HCT116 (cell line): ENCODE measurements at regions of chr11 and their contacts with region 1.

Region 1: GRCh38 chr11:66616379-66617154 is at the start of gene RBM14:
- DNase-seq: peak; percentile 98
- ATAC-seq: peak; percentile 96
- H3K4me3 ChIP-seq: peak within 1 kb of the TSS; percentile 85 to 97
- H3K27ac ChIP-seq: peak within 1 kb of the TSS; percentile 93
- H3K4me1 ChIP-seq: peaks cover 8 to 45% of the 10 kb centered on the region in 2 experiments; a peak in 3 of 4 replicates
- H3K27me3 ChIP-seq: no peaks in the 10 kb centered on the region
- CTCF ChIP-seq: no peak
- POLR2A ChIP-seq: peak; percentile 86
- RAD21 ChIP-seq: no peak
- total RNA-seq, gene RBM14: 95.3 TPM

Region 2: DNA sequence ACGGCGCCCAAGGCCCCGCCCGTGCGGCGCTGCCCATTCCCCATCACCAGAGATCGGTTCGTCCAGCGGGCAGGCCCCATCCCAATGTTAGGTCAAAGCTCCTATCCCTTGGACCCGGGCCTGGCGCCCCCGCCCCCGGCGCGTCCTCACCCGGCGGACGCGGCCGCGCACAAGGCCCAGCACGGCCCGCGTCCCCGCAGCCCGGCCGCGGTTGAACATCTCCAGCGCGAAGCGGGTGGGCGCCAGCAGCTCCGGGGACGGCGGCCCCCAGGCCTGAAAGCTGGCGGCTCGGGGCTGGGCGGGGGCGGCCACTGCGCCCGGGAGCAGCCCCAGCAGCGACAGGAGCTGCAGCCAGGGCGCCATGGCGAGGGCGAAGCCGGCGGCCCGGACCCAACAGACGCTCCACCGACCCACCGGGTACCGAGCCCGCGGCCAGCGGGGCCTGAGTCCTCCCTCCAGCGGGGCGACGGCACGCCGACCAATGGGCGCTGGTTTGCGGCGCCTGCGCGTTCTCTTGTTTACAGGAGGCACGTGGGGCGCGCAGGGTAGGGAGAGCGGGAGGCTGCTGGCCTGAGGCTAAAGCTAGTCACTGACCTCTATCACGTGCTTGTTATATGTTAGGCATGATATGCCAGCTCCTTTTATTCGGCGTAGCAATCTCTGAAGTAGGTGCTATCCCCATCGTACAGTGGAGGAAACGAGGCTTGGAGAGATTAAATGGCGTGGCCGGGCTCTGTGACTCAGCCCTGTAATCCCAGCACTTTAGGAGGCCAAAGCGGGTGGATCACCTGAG is 48.2 kb before region 1 on chr11 and contains the start of gene CTSF:
- CTCF ChIA-PET with region 1: no interaction called
- POLR2A ChIA-PET with region 1: no interaction called
- RAD21 ChIA-PET with region 1: no interaction called
- intact Hi-C with region 1: no loop called
- DNase-seq: no peak
- ATAC-seq: no peak
- H3K4me3 ChIP-seq: no peak within 1 kb of the TSS
- H3K27ac ChIP-seq: no peak within 1 kb of the TSS
- H3K4me1 ChIP-seq: no peaks in the 10 kb centered on the region
- H3K27me3 ChIP-seq: peaks cover 3% of the 10 kb centered on the region; the same call in 1 of the 2 replicates
- CTCF ChIP-seq: no peak
- POLR2A ChIP-seq: no peak
- RAD21 ChIP-seq: no peak
- total RNA-seq, gene CTSF: 0.34 TPM

Region 3: DNA sequence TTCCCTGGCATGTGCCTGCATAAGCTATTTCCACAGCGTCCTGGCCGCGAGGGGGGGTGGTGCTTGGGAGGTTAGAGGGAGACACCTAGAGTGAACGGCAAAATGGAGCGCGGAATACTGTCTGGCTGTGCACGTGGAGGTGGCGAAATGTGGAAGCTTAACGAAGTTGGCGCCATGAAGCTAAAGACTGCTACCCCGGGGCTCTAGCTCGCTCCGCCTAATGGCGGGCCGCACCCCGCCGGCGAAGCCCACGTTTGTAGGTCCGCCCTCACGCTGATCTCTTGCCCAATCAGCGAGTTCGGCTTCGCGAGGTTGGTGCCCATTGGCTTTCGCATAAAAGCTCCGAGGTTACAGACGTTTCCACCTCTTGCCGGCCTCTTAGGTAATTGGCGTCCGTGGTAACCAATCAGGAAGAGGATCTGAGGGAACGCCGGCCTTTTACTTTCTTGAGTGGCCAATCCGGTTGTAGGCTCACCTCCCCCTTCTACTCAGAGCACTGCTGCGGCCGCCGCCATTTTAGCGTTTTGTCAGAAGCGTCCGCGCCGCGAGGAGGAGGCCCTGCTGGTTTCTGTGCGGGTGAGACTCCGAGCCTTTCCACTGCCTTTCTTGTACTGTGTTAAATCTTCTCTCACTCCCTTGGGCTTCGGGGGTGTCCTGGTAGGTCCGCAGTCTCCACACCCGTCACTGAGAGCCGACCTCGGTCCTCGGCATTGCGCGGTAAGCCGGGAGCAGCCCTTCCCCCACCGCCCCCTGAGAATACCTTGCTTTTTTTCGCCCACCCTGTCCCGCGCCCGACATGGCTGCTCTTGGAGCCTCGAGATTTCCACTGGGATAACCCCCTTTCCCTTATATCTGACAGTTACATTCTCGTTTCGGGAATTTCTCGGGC is 21.9 kb after region 1 on chr11 and contains the start of gene RBM4:
- CTCF ChIA-PET with region 1: interaction called, 4 read pairs
- POLR2A ChIA-PET with region 1: interaction called, 36 read pairs
- RAD21 ChIA-PET with region 1: no interaction called
- intact Hi-C with region 1: loop called (anchors 1 kb)
- DNase-seq: peak; percentile 100
- ATAC-seq: peak; percentile 95
- H3K4me3 ChIP-seq: peak within 1 kb of the TSS; percentile 82 to 89
- H3K27ac ChIP-seq: peak within 1 kb of the TSS; percentile 72
- H3K4me1 ChIP-seq: peaks cover 4 to 29% of the 10 kb centered on the region in 2 experiments
- H3K27me3 ChIP-seq: no peaks in the 10 kb centered on the region
- CTCF ChIP-seq: no peak
- POLR2A ChIP-seq: peak; percentile 68
- RAD21 ChIP-seq: no peak
- total RNA-seq, gene RBM4: 94.4 TPM

Region 4: DNA sequence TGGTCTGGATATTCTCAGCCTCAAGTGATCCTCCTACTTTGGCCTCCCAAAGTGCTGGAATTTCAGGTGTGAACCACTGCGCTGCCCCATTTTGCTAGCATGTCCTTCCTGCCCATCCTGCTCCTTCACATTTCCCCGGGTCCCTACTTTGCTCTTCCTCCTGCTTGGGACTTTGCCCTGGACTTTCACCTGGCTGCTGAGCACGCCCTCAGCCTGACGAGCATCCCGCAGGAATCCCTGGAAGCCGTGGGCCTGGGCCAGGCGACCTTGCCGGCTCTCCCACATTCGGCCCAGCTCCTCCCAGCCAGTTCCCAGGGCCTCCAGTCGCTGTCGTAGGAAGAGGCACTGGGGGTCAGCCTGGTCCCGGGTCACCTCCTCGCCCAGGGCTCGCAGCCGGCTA is 83.8 kb after region 1 on chr11:
- CTCF ChIA-PET with region 1: no interaction called
- POLR2A ChIA-PET with region 1: no interaction called
- RAD21 ChIA-PET with region 1: no interaction called
- intact Hi-C with region 1: no loop called
- DNase-seq: no peak
- ATAC-seq: no peak
- H3K4me3 ChIP-seq: no peak overlapping the region
- H3K27ac ChIP-seq: no peak overlapping the region
- H3K4me1 ChIP-seq: no peaks in the 10 kb centered on the region; a peak in 1 of 4 replicates
- H3K27me3 ChIP-seq: no peaks in the 10 kb centered on the region
- CTCF ChIP-seq: no peak
- POLR2A ChIP-seq: no peak
- RAD21 ChIP-seq: no peak

Region 5: GRCh38 chr11:67160874-67161783 is 544.6 kb after region 1 on chr11:
- CTCF ChIA-PET with region 1: no interaction called
- POLR2A ChIA-PET with region 1: no interaction called
- RAD21 ChIA-PET with region 1: no interaction called
- intact Hi-C with region 1: no loop called
- DNase-seq: no peak
- ATAC-seq: peak; percentile 66
- H3K4me3 ChIP-seq: no peak overlapping the region
- H3K27ac ChIP-seq: no peak overlapping the region
- H3K4me1 ChIP-seq: peaks cover 20 to 27% of the 10 kb centered on the region in 2 experiments; a peak in 3 of 4 replicates
- H3K27me3 ChIP-seq: no peaks in the 10 kb centered on the region
- CTCF ChIP-seq: peak in 2 of 3 experiments; percentile 25 to 35; a peak in 4 of 6 replicates
- POLR2A ChIP-seq: no peak
- RAD21 ChIP-seq: no peak